IMR-90 (cell line): ENCODE measurements at regions of chr11 and their contacts with region 1.

Region 1: GRCh38 chr11:61361686-61362541 is at the starts of genes CYB561A3 and TMEM138:
- DNase-seq: peak; percentile 92
- ATAC-seq: peak; percentile 95
- H3K4me3 ChIP-seq: peak within 1 kb of the TSS; percentile 88
- H3K27ac ChIP-seq: peak within 1 kb of the TSS; percentile 99
- H3K4me1 ChIP-seq: peaks cover 5% of the 10 kb centered on the region
- H3K27me3 ChIP-seq: no peaks in the 10 kb centered on the region
- CTCF ChIP-seq: no peak
- POLR2A ChIP-seq: peak; percentile 88
- RAD21 ChIP-seq: no peak
- total RNA-seq, gene CYB561A3: 13.6 and 15.3 TPM in 2 replicates
- total RNA-seq, gene TMEM138: 16.7 and 16.8 TPM in 2 replicates

Region 2: DNA sequence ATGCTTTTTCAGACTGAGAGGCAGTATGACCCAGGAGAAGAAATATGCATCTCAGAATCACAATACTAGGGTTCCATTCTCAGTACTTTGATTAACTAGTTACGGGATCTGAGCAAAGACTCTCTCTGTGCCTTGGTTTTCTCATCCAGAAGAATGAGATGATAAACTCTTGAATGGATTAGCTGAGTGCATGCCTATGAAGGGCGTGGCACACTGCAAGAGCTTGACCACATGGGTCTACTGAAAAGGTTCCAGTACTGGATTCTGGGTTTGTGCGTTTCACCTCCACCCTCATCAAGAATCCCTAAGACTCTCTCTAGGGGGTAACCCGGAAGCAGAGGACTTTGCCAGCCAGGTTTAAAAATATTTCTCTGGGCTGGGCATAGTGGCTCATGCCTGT is 95.3 kb before region 1 on chr11:
- CTCF ChIA-PET with region 1: no interaction called
- POLR2A ChIA-PET with region 1: interaction called, 11 read pairs
- dilution Hi-C with region 1: no loop called
- in situ Hi-C with region 1: no loop called
- intact Hi-C with region 1: no loop called
- DNase-seq: no peak
- ATAC-seq: no peak; the same call in 1 of the 2 replicates
- H3K4me3 ChIP-seq: no peak overlapping the region
- H3K27ac ChIP-seq: no peak overlapping the region
- H3K4me1 ChIP-seq: peaks cover 2% of the 10 kb centered on the region
- H3K27me3 ChIP-seq: no peaks in the 10 kb centered on the region
- CTCF ChIP-seq: no peak
- POLR2A ChIP-seq: no peak
- RAD21 ChIP-seq: no peak

Region 3: GRCh38 chr11:61384271-61385242 is 22.6 kb after region 1 on chr11:
- CTCF ChIA-PET with region 1: interaction called, 7 read pairs
- POLR2A ChIA-PET with region 1: interaction called, 3 read pairs
- dilution Hi-C with region 1: no loop called
- in situ Hi-C with region 1: no loop called
- intact Hi-C with region 1: loop called (anchors 1 kb)
- DNase-seq: peak; percentile 42
- ATAC-seq: peak; percentile 46; the same call in 1 of the 2 replicates
- H3K4me3 ChIP-seq: no peak overlapping the region
- H3K27ac ChIP-seq: no peak overlapping the region
- H3K4me1 ChIP-seq: no peaks in the 10 kb centered on the region
- H3K27me3 ChIP-seq: no peaks in the 10 kb centered on the region
- CTCF ChIP-seq: peak; percentile 39
- POLR2A ChIP-seq: no peak
- RAD21 ChIP-seq: peak; percentile 55